IMR-90 (cell line): ENCODE measurements at regions of chr11 and their contacts with region 1.

Region 1: GRCh38 chr11:61406067-61406466 is 13.7 kb downstream of the TMEM216 start:
- DNase-seq: no peak
- ATAC-seq: no peak
- H3K4me3 ChIP-seq: no peak overlapping the region
- H3K27ac ChIP-seq: no peak overlapping the region
- H3K4me1 ChIP-seq: no peaks in the 10 kb centered on the region
- H3K27me3 ChIP-seq: no peaks in the 10 kb centered on the region
- CTCF ChIP-seq: no peak
- POLR2A ChIP-seq: no peak
- RAD21 ChIP-seq: no peak

Region 2: GRCh38 chr11:61294717-61295595 is 111.1 kb before region 1 on chr11 and contains the start of gene VWCE:
- CTCF ChIA-PET with region 1: no interaction called
- POLR2A ChIA-PET with region 1: no interaction called
- dilution Hi-C with region 1: no loop called
- in situ Hi-C with region 1: no loop called
- intact Hi-C with region 1: no loop called
- DNase-seq: peak; percentile 41
- ATAC-seq: peak; percentile 71
- H3K4me3 ChIP-seq: peak within 1 kb of the TSS; percentile 48
- H3K27ac ChIP-seq: peak within 1 kb of the TSS; percentile 23
- H3K4me1 ChIP-seq: peaks cover 16% of the 10 kb centered on the region
- H3K27me3 ChIP-seq: peaks cover 2% of the 10 kb centered on the region; the same call in 1 of the 2 replicates
- CTCF ChIP-seq: peak; percentile 40
- POLR2A ChIP-seq: no peak
- RAD21 ChIP-seq: peak; percentile 28; the same call in 1 of the 2 replicates
- total RNA-seq, gene VWCE: under 0.01 and 0.28 TPM in 2 replicates

Region 3: GRCh38 chr11:61325649-61326414 is 80.2 kb before region 1 on chr11:
- CTCF ChIA-PET with region 1: no interaction called
- POLR2A ChIA-PET with region 1: no interaction called
- dilution Hi-C with region 1: no loop called
- in situ Hi-C with region 1: no loop called
- intact Hi-C with region 1: loop called (anchors 5 kb)
- DNase-seq: no peak
- ATAC-seq: no peak
- H3K4me3 ChIP-seq: no peak overlapping the region
- H3K27ac ChIP-seq: no peak overlapping the region
- H3K4me1 ChIP-seq: peaks cover 4% of the 10 kb centered on the region
- H3K27me3 ChIP-seq: no peaks in the 10 kb centered on the region
- CTCF ChIP-seq: no peak
- POLR2A ChIP-seq: no peak
- RAD21 ChIP-seq: no peak

Region 4: DNA sequence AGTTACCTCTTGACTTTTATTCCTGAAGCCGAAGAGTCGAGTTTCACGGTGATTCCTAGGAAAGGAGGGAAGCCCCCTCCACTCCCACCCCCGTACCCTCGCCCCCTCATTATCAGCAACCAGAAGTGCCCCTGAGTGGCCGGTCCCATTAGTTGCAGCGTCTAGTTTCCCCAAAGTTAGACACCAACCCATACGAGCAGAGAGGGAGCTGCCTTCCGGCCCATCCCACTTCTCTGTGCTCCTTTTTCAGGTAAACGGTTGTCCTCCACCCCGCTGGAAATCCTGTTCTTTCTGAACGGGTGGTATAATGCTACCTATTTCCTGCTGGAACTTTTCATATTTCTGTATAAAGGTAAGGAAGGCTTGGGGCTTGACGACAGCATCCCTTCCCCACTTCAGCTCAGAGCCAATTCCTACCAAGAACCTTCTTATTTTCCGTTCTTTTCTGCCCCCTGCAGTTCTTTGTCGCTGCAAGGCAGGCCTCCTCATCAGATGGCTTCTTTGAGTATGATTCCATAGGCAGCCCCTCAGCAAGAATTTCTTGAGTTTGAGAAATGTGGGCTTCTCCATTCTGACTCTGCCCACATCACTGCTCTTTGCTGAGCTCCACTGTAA is 13.0 kb before region 1 on chr11:
- CTCF ChIA-PET with region 1: interaction called, 10 read pairs
- POLR2A ChIA-PET with region 1: interaction called, 5 read pairs
- dilution Hi-C with region 1: no loop called
- in situ Hi-C with region 1: no loop called
- intact Hi-C with region 1: no loop called
- DNase-seq: peak; percentile 34
- ATAC-seq: peak; percentile 42
- H3K4me3 ChIP-seq: peak overlapping the region; percentile 81
- H3K27ac ChIP-seq: peak overlapping the region; percentile 78
- H3K4me1 ChIP-seq: peaks cover 3% of the 10 kb centered on the region; the same call in 1 of the 2 replicates
- H3K27me3 ChIP-seq: no peaks in the 10 kb centered on the region
- CTCF ChIP-seq: peak; percentile 39
- POLR2A ChIP-seq: no peak
- RAD21 ChIP-seq: no peak

Region 5: GRCh38 chr11:61417670-61418069 is 11.6 kb after region 1 on chr11:
- CTCF ChIA-PET with region 1: no interaction called
- POLR2A ChIA-PET with region 1: no interaction called
- dilution Hi-C with region 1: no loop called
- in situ Hi-C with region 1: no loop called
- intact Hi-C with region 1: loop called (anchors 2 kb)
- DNase-seq: peak; percentile 30
- ATAC-seq: peak; percentile 45
- H3K4me3 ChIP-seq: no peak overlapping the region
- H3K27ac ChIP-seq: no peak overlapping the region
- H3K4me1 ChIP-seq: no peaks in the 10 kb centered on the region
- H3K27me3 ChIP-seq: no peaks in the 10 kb centered on the region
- CTCF ChIP-seq: no peak
- POLR2A ChIP-seq: no peak
- RAD21 ChIP-seq: no peak

Region 6: GRCh38 chr11:61701242-61701886 is 295.3 kb after region 1 on chr11:
- CTCF ChIA-PET with region 1: no interaction called
- POLR2A ChIA-PET with region 1: no interaction called
- dilution Hi-C with region 1: no loop called
- in situ Hi-C with region 1: no loop called
- intact Hi-C with region 1: no loop called
- DNase-seq: peak; percentile 16
- ATAC-seq: peak; percentile 53
- H3K4me3 ChIP-seq: no peak overlapping the region
- H3K27ac ChIP-seq: no peak overlapping the region
- H3K4me1 ChIP-seq: peaks cover 5% of the 10 kb centered on the region
- H3K27me3 ChIP-seq: peaks cover 14% of the 10 kb centered on the region; the same call in 1 of the 2 replicates
- CTCF ChIP-seq: peak; percentile 33; the same call in 1 of the 2 replicates
- POLR2A ChIP-seq: no peak
- RAD21 ChIP-seq: peak; percentile 27; the same call in 1 of the 2 replicates

Region 7: GRCh38 chr11:62033191-62034044 is 627.4 kb after region 1 on chr11:
- CTCF ChIA-PET with region 1: no interaction called
- POLR2A ChIA-PET with region 1: no interaction called
- dilution Hi-C with region 1: no loop called
- in situ Hi-C with region 1: no loop called
- intact Hi-C with region 1: no loop called
- DNase-seq: no peak
- ATAC-seq: no peak
- H3K4me3 ChIP-seq: no peak overlapping the region
- H3K27ac ChIP-seq: no peak overlapping the region
- H3K4me1 ChIP-seq: no peaks in the 10 kb centered on the region
- H3K27me3 ChIP-seq: peaks cover 5% of the 10 kb centered on the region
- CTCF ChIP-seq: no peak
- POLR2A ChIP-seq: no peak
- RAD21 ChIP-seq: no peak